ENCODE measurements at regions of chr12 and their contacts with region 1.

Region 1: GRCh38 chr12:8544295-8544694 is 3.6 kb upstream of the CLEC4E start:
- DNase-seq: peak; percentile 69
- H3K4me3 ChIP-seq: no peak overlapping the region
- H3K27ac ChIP-seq: no peak overlapping the region
- H3K4me1 ChIP-seq: no peaks in the 10 kb centered on the region
- H3K27me3 ChIP-seq: peaks cover 26% of the 10 kb centered on the region
- CTCF ChIP-seq: peak; percentile 92

Region 2: GRCh38 chr12:7602277-7602676 is 942.0 kb before region 1 on chr12:
- CTCF ChIA-PET with region 1: no interaction called
- POLR2A ChIA-PET with region 1: no interaction called
- intact Hi-C with region 1: no loop called
- DNase-seq: no peak
- H3K4me3 ChIP-seq: no peak overlapping the region
- H3K27ac ChIP-seq: no peak overlapping the region
- H3K4me1 ChIP-seq: no peaks in the 10 kb centered on the region
- H3K27me3 ChIP-seq: no peaks in the 10 kb centered on the region
- CTCF ChIP-seq: no peak

Region 3: GRCh38 chr12:7806863-7807487 is 737.3 kb before region 1 on chr12:
- CTCF ChIA-PET with region 1: interaction called, 10 read pairs
- POLR2A ChIA-PET with region 1: no interaction called
- intact Hi-C with region 1: no loop called
- DNase-seq: peak; percentile 81
- H3K4me3 ChIP-seq: no peak overlapping the region
- H3K27ac ChIP-seq: no peak overlapping the region
- H3K4me1 ChIP-seq: no peaks in the 10 kb centered on the region
- H3K27me3 ChIP-seq: no peaks in the 10 kb centered on the region
- CTCF ChIP-seq: peak; percentile 97

Region 4: DNA sequence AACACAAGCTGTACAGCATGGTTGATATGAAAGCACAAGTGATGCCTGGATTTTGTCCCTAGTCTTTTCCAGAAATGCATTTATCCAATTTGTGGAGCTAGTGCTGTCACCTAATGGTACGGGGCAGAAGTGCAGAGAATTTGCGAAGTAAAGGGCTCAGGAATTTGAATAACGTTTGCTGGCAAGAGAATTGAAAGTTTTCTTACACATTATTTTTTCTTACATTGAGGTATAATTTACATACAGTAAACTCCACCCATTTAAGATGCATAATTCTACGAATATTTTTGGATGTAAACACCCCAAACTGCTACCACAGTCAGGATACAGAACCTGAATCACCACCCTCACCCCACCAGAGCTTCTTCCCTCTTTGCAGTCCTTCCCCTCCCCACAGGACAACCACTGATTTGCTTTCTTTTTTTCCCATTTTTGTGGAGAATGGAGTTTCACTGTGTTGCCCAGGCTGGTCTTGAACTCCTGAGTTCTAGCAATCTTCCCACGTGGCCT is 64.8 kb after region 1 on chr12:
- CTCF ChIA-PET with region 1: interaction called, 20 read pairs
- POLR2A ChIA-PET with region 1: no interaction called
- intact Hi-C with region 1: loop called (anchors 2 kb)
- DNase-seq: peak; percentile 58
- H3K4me3 ChIP-seq: peak overlapping the region; percentile 7
- H3K27ac ChIP-seq: no peak overlapping the region
- H3K4me1 ChIP-seq: no peaks in the 10 kb centered on the region
- H3K27me3 ChIP-seq: no peaks in the 10 kb centered on the region
- CTCF ChIP-seq: peak; percentile 82

Region 5: DNA sequence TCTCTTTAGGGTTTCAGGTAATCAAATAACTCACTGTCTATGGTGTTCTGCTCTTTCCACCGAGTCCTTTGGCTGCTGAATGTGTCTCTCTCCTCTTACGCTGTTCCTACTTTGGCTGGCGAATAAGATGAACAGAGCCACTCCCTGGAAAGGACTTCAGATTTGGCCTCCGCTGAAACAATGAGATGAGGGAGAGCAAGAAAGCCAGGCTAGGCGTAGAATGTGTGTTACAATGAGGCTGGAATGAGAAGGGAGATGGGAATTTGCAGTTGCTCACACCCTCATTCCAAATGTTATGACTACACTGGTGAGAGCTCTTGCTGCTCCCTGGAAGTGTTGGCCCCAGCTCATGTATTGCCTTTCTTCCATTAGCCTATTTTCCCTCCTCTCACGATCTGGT is 118.3 kb after region 1 on chr12 and contains the start of gene MFAP5:
- CTCF ChIA-PET with region 1: interaction called, 10 read pairs
- POLR2A ChIA-PET with region 1: no interaction called
- intact Hi-C with region 1: no loop called
- DNase-seq: no peak
- H3K4me3 ChIP-seq: no peak within 1 kb of the TSS
- H3K27ac ChIP-seq: no peak within 1 kb of the TSS
- H3K4me1 ChIP-seq: no peaks in the 10 kb centered on the region
- H3K27me3 ChIP-seq: peaks cover 4% of the 10 kb centered on the region
- CTCF ChIP-seq: no peak
- total RNA-seq, gene MFAP5: 0.52 and 1.7 TPM in 2 replicates

Region 6: GRCh38 chr12:8890313-8891085 is 346.2 kb after region 1 on chr12:
- CTCF ChIA-PET with region 1: interaction called, 11 read pairs
- POLR2A ChIA-PET with region 1: no interaction called
- intact Hi-C with region 1: no loop called
- DNase-seq: peak; percentile 72
- H3K4me3 ChIP-seq: peak overlapping the region; percentile 43
- H3K27ac ChIP-seq: no peak overlapping the region
- H3K4me1 ChIP-seq: no peaks in the 10 kb centered on the region
- H3K27me3 ChIP-seq: no peaks in the 10 kb centered on the region
- CTCF ChIP-seq: peak; percentile 94

Region 7: GRCh38 chr12:9049520-9050133 is 505.3 kb after region 1 on chr12:
- CTCF ChIA-PET with region 1: interaction called, 10 read pairs
- POLR2A ChIA-PET with region 1: no interaction called
- intact Hi-C with region 1: loop called (anchors 5 kb)
- DNase-seq: peak; percentile 59
- H3K4me3 ChIP-seq: no peak overlapping the region
- H3K27ac ChIP-seq: no peak overlapping the region
- H3K4me1 ChIP-seq: no peaks in the 10 kb centered on the region
- H3K27me3 ChIP-seq: no peaks in the 10 kb centered on the region
- CTCF ChIP-seq: peak; percentile 73

Measured in A673 (cell line).